ENCODE measurements at regions of chr15 and their contacts with region 1.

Region 1: DNA sequence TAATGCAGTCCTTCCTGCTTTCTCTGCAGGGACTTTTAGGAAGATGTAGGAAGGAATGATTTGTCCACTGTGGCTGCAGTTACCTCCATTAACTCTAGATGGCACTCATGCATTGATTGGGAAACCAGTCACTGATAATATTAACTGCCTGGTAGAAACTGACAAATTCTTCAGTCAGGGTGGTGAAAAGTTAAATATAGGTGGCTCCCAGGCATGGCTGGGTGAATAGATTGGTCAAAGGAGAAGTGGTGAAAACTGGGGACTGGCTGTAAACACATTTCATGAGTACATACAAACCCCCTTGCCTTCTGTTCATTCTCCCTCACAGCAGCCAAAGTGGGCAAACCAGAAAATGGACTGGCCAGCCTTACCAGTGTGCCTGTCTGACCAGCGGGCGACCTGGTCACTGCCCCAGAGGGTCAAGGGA is 333.4 kb downstream of the THSD4 start:
- DNase-seq: no peak
- H3K4me3 ChIP-seq: no peak overlapping the region
- CTCF ChIP-seq: peak; percentile 75

Region 2: DNA sequence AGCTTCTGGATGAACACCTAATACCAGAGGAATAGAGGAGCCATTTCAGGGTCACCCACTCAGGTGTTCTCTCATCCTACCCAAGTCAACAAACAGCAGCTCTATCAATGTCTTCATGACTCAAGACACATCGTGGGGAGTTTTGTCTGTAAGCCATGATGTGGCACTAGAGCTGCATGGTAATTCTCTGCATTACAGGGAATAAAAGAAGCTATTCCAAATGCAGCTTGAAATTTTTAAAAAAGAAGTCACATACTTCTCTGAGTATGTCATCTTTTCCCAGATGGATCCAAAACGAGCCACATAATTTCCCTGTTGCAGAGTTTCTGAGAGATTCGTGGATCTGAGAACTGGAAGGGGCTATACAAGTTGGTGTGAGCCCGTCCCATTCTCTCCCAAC is 339.6 kb before region 1 on chr15:
- CTCF ChIA-PET with region 1: interaction called, 98 read pairs
- POLR2A ChIA-PET with region 1: interaction called, 3 read pairs
- DNase-seq: peak; percentile 58
- H3K4me3 ChIP-seq: no peak overlapping the region
- CTCF ChIP-seq: peak; percentile 41

Region 3: GRCh38 chr15:71501344-71502076 is 52.8 kb after region 1 on chr15:
- CTCF ChIA-PET with region 1: no interaction called
- POLR2A ChIA-PET with region 1: no interaction called
- DNase-seq: no peak
- H3K4me3 ChIP-seq: no peak overlapping the region
- CTCF ChIP-seq: no peak

Region 4: GRCh38 chr15:71651750-71652186 is 203.1 kb after region 1 on chr15:
- CTCF ChIA-PET with region 1: interaction called, 71 read pairs
- POLR2A ChIA-PET with region 1: no interaction called
- DNase-seq: peak; percentile 69
- H3K4me3 ChIP-seq: no peak overlapping the region
- CTCF ChIP-seq: peak; percentile 63

Region 5: GRCh38 chr15:71730277-71731144 is 281.8 kb after region 1 on chr15:
- CTCF ChIA-PET with region 1: interaction called, 51 read pairs
- POLR2A ChIA-PET with region 1: no interaction called
- DNase-seq: no peak
- H3K4me3 ChIP-seq: no peak overlapping the region
- CTCF ChIP-seq: peak; percentile 83